ENCODE measurements at regions of chr5 and their contacts with region 1.

Region 1: GRCh38 chr5:64074533-64074932 is 91.1 kb upstream of the RNF180 start:
- DNase-seq: peak; percentile 76
- ATAC-seq: peak; percentile 84
- H3K4me3 ChIP-seq: no peak overlapping the region
- H3K27ac ChIP-seq: no peak overlapping the region
- H3K4me1 ChIP-seq: peaks cover 2% of the 10 kb centered on the region; the same call in 1 of the 2 replicates
- H3K27me3 ChIP-seq: no peaks in the 10 kb centered on the region
- CTCF ChIP-seq: peak; percentile 82

Region 2: GRCh38 chr5:64100197-64100596 is 25.7 kb after region 1 on chr5:
- CTCF ChIA-PET with region 1: interaction called, 8 read pairs
- POLR2A ChIA-PET with region 1: no interaction called
- intact Hi-C with region 1: loop called (anchors 2 kb)
- DNase-seq: no peak
- ATAC-seq: peak; percentile 64
- H3K4me3 ChIP-seq: no peak overlapping the region
- H3K27ac ChIP-seq: no peak overlapping the region
- H3K4me1 ChIP-seq: no peaks in the 10 kb centered on the region
- H3K27me3 ChIP-seq: no peaks in the 10 kb centered on the region
- CTCF ChIP-seq: 0 out of 2 replicates have a peak, but pooled peaks have one; percentile 33

Region 3: GRCh38 chr5:64110222-64110621 is 35.7 kb after region 1 on chr5:
- CTCF ChIA-PET with region 1: no interaction called
- POLR2A ChIA-PET with region 1: no interaction called
- intact Hi-C with region 1: no loop called
- DNase-seq: no peak
- ATAC-seq: no peak
- H3K4me3 ChIP-seq: no peak overlapping the region
- H3K27ac ChIP-seq: no peak overlapping the region
- H3K4me1 ChIP-seq: no peaks in the 10 kb centered on the region
- H3K27me3 ChIP-seq: no peaks in the 10 kb centered on the region; the same call in 1 of the 2 replicates
- CTCF ChIP-seq: no peak

Region 4: GRCh38 chr5:64147849-64148441 is 73.4 kb after region 1 on chr5:
- CTCF ChIA-PET with region 1: no interaction called
- POLR2A ChIA-PET with region 1: interaction called, 3 read pairs
- intact Hi-C with region 1: loop called (anchors 1 kb)
- DNase-seq: peak; percentile 71
- ATAC-seq: peak; percentile 44
- H3K4me3 ChIP-seq: no peak overlapping the region
- H3K27ac ChIP-seq: no peak overlapping the region
- H3K4me1 ChIP-seq: peaks cover 18% of the 10 kb centered on the region
- H3K27me3 ChIP-seq: no peaks in the 10 kb centered on the region
- CTCF ChIP-seq: peak; percentile 93

Region 5: GRCh38 chr5:64207978-64208377 is 133.4 kb after region 1 on chr5:
- CTCF ChIA-PET with region 1: interaction called, 3 read pairs
- POLR2A ChIA-PET with region 1: no interaction called
- intact Hi-C with region 1: loop called (anchors 1 kb)
- DNase-seq: peak; percentile 70
- ATAC-seq: no peak
- H3K4me3 ChIP-seq: no peak overlapping the region
- H3K27ac ChIP-seq: no peak overlapping the region
- H3K4me1 ChIP-seq: peaks cover 15% of the 10 kb centered on the region
- H3K27me3 ChIP-seq: no peaks in the 10 kb centered on the region
- CTCF ChIP-seq: peak; percentile 67